Transverse colon (tissue), 4 donors: ENCODE measurements at regions of chr14 and their contacts with region 1.

Region 1: DNA sequence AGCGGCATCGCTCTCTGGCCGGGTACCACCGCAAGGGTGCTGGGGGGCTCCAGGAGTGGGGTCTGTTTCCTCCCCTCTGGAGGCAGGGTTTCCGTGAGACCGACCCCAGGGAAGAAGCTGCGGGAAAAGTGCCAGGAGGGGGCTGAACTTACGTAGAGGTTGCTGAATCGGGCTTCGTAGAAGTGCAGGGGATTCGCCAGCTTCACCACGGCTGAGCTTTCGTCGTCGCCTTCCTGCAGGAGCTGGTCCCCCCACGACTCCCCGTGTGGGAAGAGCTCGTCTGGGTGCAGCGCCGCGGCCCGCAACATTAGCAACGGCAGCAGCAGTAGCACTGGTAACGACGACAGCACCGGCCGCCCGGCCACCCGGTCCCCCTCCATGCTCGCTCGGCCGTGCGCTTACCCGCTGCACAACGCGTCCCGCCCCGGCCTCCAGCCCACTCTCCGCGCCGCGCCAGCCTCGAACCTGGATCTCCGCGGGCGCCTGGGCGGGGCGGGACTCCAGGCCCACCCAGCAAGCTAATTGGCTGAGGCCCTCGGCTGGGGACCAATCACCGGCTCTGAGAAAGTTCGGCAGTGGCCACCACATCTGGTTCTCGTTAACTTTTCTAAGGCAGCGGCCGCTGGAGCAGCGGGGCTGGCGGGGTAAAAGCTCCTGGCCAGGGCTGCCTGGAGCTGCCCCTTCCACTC is at the start of gene NID2:
- DNase-seq: peak; percentile 82
- H3K4me3 ChIP-seq: peak within 1 kb of the TSS; percentile 52 to 85 (median 62)
- H3K27ac ChIP-seq: peak within 1 kb of the TSS; percentile 76 to 90 (median 81)
- H3K4me1 ChIP-seq: peaks cover 3 to 24% (median 18%) of the 10 kb centered on the region in 4 donors
- H3K27me3 ChIP-seq: peaks cover 16% of the 10 kb centered on the region
- CTCF ChIP-seq: peak in 1 of 5 experiments; percentile 7
- EP300 ChIP-seq: no peak
- POLR2A ChIP-seq: no peak
- total RNA-seq, gene NID2: 8.3 to 62.7 (median 27.4) TPM

Region 2: GRCh38 chr14:51759950-51760349 is 308.8 kb before region 1 on chr14:
- in situ Hi-C with region 1: no loop called
- intact Hi-C with region 1: no loop called
- DNase-seq: no peak
- H3K4me3 ChIP-seq: no peak overlapping the region
- H3K27ac ChIP-seq: no peak overlapping the region
- H3K4me1 ChIP-seq: no peaks in the 10 kb centered on the region
- H3K27me3 ChIP-seq: no peaks in the 10 kb centered on the region
- CTCF ChIP-seq: no peak
- EP300 ChIP-seq: no peak
- POLR2A ChIP-seq: no peak

Region 3: DNA sequence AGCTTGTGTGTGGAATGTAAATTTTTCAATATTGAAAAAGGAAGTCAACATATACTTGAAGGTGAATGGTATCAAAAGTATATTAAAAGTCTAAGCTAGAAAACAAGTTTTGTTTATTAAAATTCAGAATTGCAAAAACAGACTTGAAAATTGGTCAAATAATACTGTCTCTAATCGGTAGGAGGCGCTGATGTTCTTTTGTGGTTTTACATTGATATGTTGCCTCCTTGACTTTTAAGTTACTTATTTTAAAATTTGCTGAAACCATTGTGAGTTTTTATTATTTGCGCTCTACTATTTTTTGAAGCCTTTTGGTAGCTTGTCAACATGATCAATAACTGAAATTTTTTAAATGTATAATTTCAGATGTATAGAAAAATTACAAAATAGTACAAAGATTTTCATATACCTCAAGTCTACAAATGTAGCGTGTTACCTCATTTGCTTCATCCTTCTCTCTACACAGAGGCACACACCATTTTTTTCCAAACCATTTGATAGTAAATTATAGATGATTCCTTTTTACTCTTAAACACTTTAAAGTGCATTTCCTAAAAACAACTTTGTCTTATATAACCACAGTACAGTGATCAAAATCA is 72.5 kb before region 1 on chr14:
- in situ Hi-C with region 1: no loop called
- intact Hi-C with region 1: loop called (anchors 2 kb)
- DNase-seq: no peak
- H3K4me3 ChIP-seq: no peak overlapping the region
- H3K27ac ChIP-seq: no peak overlapping the region
- H3K4me1 ChIP-seq: peaks cover 0 to 8% (median 0%) of the 10 kb centered on the region in 4 donors
- H3K27me3 ChIP-seq: no peaks in the 10 kb centered on the region
- CTCF ChIP-seq: peak; percentile 77 to 85 (median 79)
- EP300 ChIP-seq: no peak
- POLR2A ChIP-seq: no peak

Region 4: GRCh38 chr14:52091928-52092327 is 23.2 kb after region 1 on chr14:
- in situ Hi-C with region 1: no loop called
- intact Hi-C with region 1: no loop called
- DNase-seq: no peak
- H3K4me3 ChIP-seq: no peak overlapping the region
- H3K27ac ChIP-seq: no peak overlapping the region
- H3K4me1 ChIP-seq: no peaks in the 10 kb centered on the region
- H3K27me3 ChIP-seq: no peaks in the 10 kb centered on the region
- CTCF ChIP-seq: no peak
- EP300 ChIP-seq: no peak
- POLR2A ChIP-seq: no peak

Region 5: GRCh38 chr14:52124791-52125661 is 56.3 kb after region 1 on chr14:
- in situ Hi-C with region 1: no loop called
- intact Hi-C with region 1: loop called (anchors 10 kb)
- DNase-seq: no peak
- H3K4me3 ChIP-seq: no peak overlapping the region
- H3K27ac ChIP-seq: peak overlapping the region in 2 of 4 donors; percentile 7 to 44
- H3K4me1 ChIP-seq: peaks cover 0 to 17% (median 0%) of the 10 kb centered on the region in 4 donors
- H3K27me3 ChIP-seq: no peaks in the 10 kb centered on the region
- CTCF ChIP-seq: no peak
- EP300 ChIP-seq: no peak
- POLR2A ChIP-seq: no peak